ENCODE measurements at regions of chr4 and their contacts with region 1.

Region 1: DNA sequence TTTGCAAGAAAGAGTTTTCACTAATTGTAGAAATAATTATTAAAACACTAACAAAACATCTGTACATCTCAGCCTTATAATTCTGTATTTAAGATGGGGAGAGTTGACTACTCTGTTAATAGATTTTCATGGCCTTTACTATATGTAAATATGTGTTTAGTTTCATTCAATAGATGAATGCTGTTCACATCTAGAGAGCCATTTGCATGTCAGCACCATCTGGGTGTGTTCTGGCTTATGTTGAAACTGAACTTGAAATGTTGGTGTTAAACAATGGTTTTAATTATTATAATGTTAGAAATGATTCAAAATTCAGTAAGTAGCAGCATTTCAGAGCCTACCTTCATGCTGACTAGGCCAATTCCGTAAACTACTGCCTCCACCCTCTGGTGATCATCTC is 102.5 kb upstream of the ADAD1 start:
- DNase-seq: no peak
- H3K4me3 Mint-ChIP-seq: no peak overlapping the region
- H3K27ac Mint-ChIP-seq: no peak overlapping the region
- H3K4me1 Mint-ChIP-seq: no peaks in the 10 kb centered on the region
- H3K27me3 Mint-ChIP-seq: no peaks in the 10 kb centered on the region

Region 2: DNA sequence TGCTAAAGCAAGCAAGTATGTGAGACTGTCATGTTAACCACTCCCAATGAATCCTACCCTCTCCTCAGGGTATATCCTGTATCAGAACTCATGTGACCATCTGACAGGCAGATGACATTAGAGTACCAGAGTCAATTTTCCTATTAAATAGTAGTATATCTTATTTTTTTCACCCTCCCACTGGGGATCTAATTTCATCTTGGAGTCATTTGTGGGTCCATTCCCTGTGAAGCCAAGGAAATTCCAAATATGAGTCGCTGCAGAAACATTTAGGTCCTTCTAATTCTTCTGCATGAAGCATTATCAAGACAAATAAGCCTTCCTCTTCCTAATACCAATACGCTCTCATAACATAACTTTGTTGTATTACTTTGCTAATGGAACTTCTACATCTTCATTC is 176.5 kb before region 1 on chr4:
- intact Hi-C with region 1: loop called (anchors 10 kb)
- DNase-seq: no peak
- H3K4me3 Mint-ChIP-seq: no peak overlapping the region
- H3K27ac Mint-ChIP-seq: no peak overlapping the region
- H3K4me1 Mint-ChIP-seq: no peaks in the 10 kb centered on the region
- H3K27me3 Mint-ChIP-seq: peaks cover 22% of the 10 kb centered on the region